ENCODE measurements at regions of chr9 and their contacts with region 1.

Region 1: GRCh38 chr9:22238809-22239684 is 207.6 kb upstream of the DMRTA1 start:
- DNase-seq: peak; percentile 65
- H3K4me3 ChIP-seq: no peak overlapping the region
- H3K27ac ChIP-seq: peak overlapping the region; percentile 42
- H3K4me1 ChIP-seq: peaks cover 23% of the 10 kb centered on the region
- H3K27me3 ChIP-seq: no peaks in the 10 kb centered on the region
- CTCF ChIP-seq: peak; percentile 19 to 41
- POLR2A ChIP-seq: no peak

Region 2: GRCh38 chr9:22037954-22038690 is 200.9 kb before region 1 on chr9:
- CTCF ChIA-PET with region 1: interaction called, 19 read pairs
- POLR2A ChIA-PET with region 1: no interaction called
- dilution Hi-C with region 1: no loop called
- intact Hi-C with region 1: loop called (anchors 2 kb)
- DNase-seq: peak; percentile 51
- H3K4me3 ChIP-seq: no peak overlapping the region
- H3K27ac ChIP-seq: no peak overlapping the region
- H3K4me1 ChIP-seq: no peaks in the 10 kb centered on the region
- H3K27me3 ChIP-seq: no peaks in the 10 kb centered on the region
- CTCF ChIP-seq: peak; percentile 22 to 38
- POLR2A ChIP-seq: no peak

Region 3: GRCh38 chr9:22105005-22105722 is 133.9 kb before region 1 on chr9:
- CTCF ChIA-PET with region 1: interaction called, 6 read pairs
- POLR2A ChIA-PET with region 1: no interaction called
- dilution Hi-C with region 1: no loop called
- intact Hi-C with region 1: loop called (anchors 1 kb)
- DNase-seq: no peak
- H3K4me3 ChIP-seq: no peak overlapping the region
- H3K27ac ChIP-seq: no peak overlapping the region
- H3K4me1 ChIP-seq: peaks cover 20% of the 10 kb centered on the region
- H3K27me3 ChIP-seq: no peaks in the 10 kb centered on the region
- CTCF ChIP-seq: no peak
- POLR2A ChIP-seq: no peak

Region 4: GRCh38 chr9:22211593-22212360 is 27.3 kb before region 1 on chr9:
- CTCF ChIA-PET with region 1: interaction called, 36 read pairs
- POLR2A ChIA-PET with region 1: no interaction called
- dilution Hi-C with region 1: no loop called
- intact Hi-C with region 1: loop called (anchors 2 kb)
- DNase-seq: peak; percentile 92
- H3K4me3 ChIP-seq: no peak overlapping the region
- H3K27ac ChIP-seq: peak overlapping the region; percentile 21
- H3K4me1 ChIP-seq: peaks cover 30% of the 10 kb centered on the region
- H3K27me3 ChIP-seq: no peaks in the 10 kb centered on the region
- CTCF ChIP-seq: no peak
- POLR2A ChIP-seq: no peak

Region 5: GRCh38 chr9:22285066-22285465 is 46.0 kb after region 1 on chr9:
- CTCF ChIA-PET with region 1: no interaction called
- POLR2A ChIA-PET with region 1: no interaction called
- dilution Hi-C with region 1: no loop called
- intact Hi-C with region 1: no loop called
- DNase-seq: no peak
- H3K4me3 ChIP-seq: no peak overlapping the region
- H3K27ac ChIP-seq: no peak overlapping the region
- H3K4me1 ChIP-seq: no peaks in the 10 kb centered on the region
- H3K27me3 ChIP-seq: peaks cover 2 to 8% of the 10 kb centered on the region in 2 experiments
- CTCF ChIP-seq: no peak
- POLR2A ChIP-seq: no peak

Region 6: GRCh38 chr9:22342491-22343217 is 103.6 kb after region 1 on chr9:
- CTCF ChIA-PET with region 1: no interaction called
- POLR2A ChIA-PET with region 1: no interaction called
- dilution Hi-C with region 1: no loop called
- intact Hi-C with region 1: no loop called
- DNase-seq: peak; percentile 4
- H3K4me3 ChIP-seq: no peak overlapping the region
- H3K27ac ChIP-seq: no peak overlapping the region
- H3K4me1 ChIP-seq: no peaks in the 10 kb centered on the region
- H3K27me3 ChIP-seq: no peaks in the 10 kb centered on the region
- CTCF ChIP-seq: no peak
- POLR2A ChIP-seq: no peak